ENCODE measurements at regions of chr12 and their contacts with region 1.

Region 1: GRCh38 chr12:26434299-26435068 is 239.1 kb downstream of the SSPN start:
- DNase-seq: no peak
- ATAC-seq: peak; percentile 63

Region 2: DNA sequence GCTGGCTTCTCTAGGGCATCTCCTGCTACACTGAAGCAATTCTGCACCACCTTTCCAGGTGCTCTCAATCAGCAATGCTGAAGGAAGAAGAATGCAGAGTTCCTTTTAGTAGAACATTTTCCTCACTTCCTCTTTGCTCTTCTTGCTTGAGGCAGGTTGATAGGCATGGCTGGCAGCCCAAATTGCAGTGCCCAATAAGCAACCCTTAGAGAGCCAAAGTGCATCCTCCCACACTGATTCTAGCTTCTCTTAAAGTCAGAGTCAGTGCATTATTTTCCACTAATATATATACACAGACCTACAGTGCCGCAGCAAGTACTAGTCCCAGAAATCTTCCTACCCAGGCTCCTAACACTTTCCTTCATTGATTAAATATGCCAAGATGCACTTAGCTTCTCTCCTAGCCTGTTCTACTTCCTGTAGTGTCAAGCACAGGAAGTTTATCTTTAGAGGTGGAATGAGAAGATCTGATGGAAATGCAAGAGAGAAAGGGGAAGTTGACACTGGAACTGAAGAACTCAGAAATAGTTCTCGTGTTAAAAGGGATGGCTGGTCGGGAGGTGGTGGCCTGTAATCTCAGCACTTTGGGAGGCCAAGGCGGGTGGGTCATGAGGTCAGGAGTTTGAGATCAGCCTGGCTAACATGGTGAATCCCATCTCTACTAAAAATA is 106.4 kb before region 1 on chr12:
- intact Hi-C with region 1: no loop called
- DNase-seq: no peak
- ATAC-seq: no peak

Region 3: GRCh38 chr12:26614020-26614616 is 179.6 kb after region 1 on chr12:
- intact Hi-C with region 1: loop called (anchors 2 kb)
- DNase-seq: no peak
- ATAC-seq: no peak

Region 4: GRCh38 chr12:26651566-26652188 is 217.2 kb after region 1 on chr12:
- intact Hi-C with region 1: loop called (anchors 2 kb)
- DNase-seq: no peak
- ATAC-seq: peak; percentile 50

Measured in Right ventricle myocardium inferior (tissue), 1 donor.